ENCODE measurements at regions of chr17 and their contacts with region 1.

Region 1: GRCh38 chr17:27805520-27806146 is 5.3 kb upstream of the NOS2 start:
- DNase-seq: peak; percentile 86
- ATAC-seq: peak; percentile 97
- H3K4me3 ChIP-seq: no peak overlapping the region
- H3K27ac ChIP-seq: no peak overlapping the region
- H3K4me1 ChIP-seq: peaks cover 3% of the 10 kb centered on the region
- H3K27me3 ChIP-seq: peaks cover 10% of the 10 kb centered on the region
- CTCF ChIP-seq: peak; percentile 82
- POLR2A ChIP-seq: no peak
- RAD21 ChIP-seq: peak; percentile 79

Region 2: DNA sequence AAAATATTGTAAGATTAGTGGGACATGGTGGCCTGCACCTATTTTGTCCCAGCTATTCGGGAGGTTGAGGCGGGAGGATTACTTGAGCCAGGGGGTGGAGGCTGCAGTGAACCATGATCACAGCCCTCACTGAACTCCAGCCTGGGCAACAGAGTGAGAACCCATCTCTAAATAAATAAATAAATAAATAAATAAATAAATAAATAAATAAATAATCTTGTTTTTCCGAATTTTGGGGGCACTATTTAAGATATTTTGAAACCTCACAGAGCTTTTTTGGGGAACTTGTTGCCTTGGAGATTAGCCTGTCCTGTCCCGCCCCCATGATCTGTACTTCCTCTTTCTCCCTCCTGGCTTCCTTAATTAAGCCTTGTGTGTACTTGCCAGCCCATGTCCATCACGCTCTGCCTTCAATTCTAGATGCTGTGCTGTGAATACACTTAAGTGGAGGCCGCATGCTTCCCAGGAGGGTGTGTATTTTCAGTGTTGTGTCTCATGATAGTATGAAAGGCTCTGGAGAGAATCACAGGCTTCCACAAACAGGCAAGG is 170.3 kb before region 1 on chr17:
- CTCF ChIA-PET with region 1: no interaction called
- POLR2A ChIA-PET with region 1: no interaction called
- dilution Hi-C with region 1: no loop called
- in situ Hi-C with region 1: no loop called
- intact Hi-C with region 1: no loop called
- DNase-seq: no peak
- ATAC-seq: no peak
- H3K4me3 ChIP-seq: no peak overlapping the region
- H3K27ac ChIP-seq: no peak overlapping the region
- H3K4me1 ChIP-seq: peaks cover 10% of the 10 kb centered on the region
- H3K27me3 ChIP-seq: no peaks in the 10 kb centered on the region
- CTCF ChIP-seq: no peak
- POLR2A ChIP-seq: no peak
- RAD21 ChIP-seq: no peak

Region 3: GRCh38 chr17:27879987-27880608 is 74.5 kb after region 1 on chr17:
- CTCF ChIA-PET with region 1: interaction called, 62 read pairs
- POLR2A ChIA-PET with region 1: no interaction called
- dilution Hi-C with region 1: no loop called
- in situ Hi-C with region 1: loop called (anchors 10 kb)
- intact Hi-C with region 1: loop called (anchors 1 kb)
- DNase-seq: peak; percentile 54
- ATAC-seq: peak; percentile 98
- H3K4me3 ChIP-seq: no peak overlapping the region
- H3K27ac ChIP-seq: no peak overlapping the region
- H3K4me1 ChIP-seq: no peaks in the 10 kb centered on the region
- H3K27me3 ChIP-seq: no peaks in the 10 kb centered on the region; the same call in 1 of the 2 replicates
- CTCF ChIP-seq: peak; percentile 88
- POLR2A ChIP-seq: no peak
- RAD21 ChIP-seq: peak; percentile 93

Region 4: GRCh38 chr17:28145348-28145747 is 339.7 kb after region 1 on chr17:
- CTCF ChIA-PET with region 1: no interaction called
- POLR2A ChIA-PET with region 1: no interaction called
- dilution Hi-C with region 1: no loop called
- in situ Hi-C with region 1: no loop called
- intact Hi-C with region 1: loop called (anchors 10 kb)
- DNase-seq: peak; percentile 29
- ATAC-seq: peak; percentile 12; the same call in 1 of the 2 replicates
- H3K4me3 ChIP-seq: no peak overlapping the region
- H3K27ac ChIP-seq: no peak overlapping the region
- H3K4me1 ChIP-seq: peaks cover 4% of the 10 kb centered on the region
- H3K27me3 ChIP-seq: no peaks in the 10 kb centered on the region
- CTCF ChIP-seq: no peak
- POLR2A ChIP-seq: no peak
- RAD21 ChIP-seq: no peak

Region 5: DNA sequence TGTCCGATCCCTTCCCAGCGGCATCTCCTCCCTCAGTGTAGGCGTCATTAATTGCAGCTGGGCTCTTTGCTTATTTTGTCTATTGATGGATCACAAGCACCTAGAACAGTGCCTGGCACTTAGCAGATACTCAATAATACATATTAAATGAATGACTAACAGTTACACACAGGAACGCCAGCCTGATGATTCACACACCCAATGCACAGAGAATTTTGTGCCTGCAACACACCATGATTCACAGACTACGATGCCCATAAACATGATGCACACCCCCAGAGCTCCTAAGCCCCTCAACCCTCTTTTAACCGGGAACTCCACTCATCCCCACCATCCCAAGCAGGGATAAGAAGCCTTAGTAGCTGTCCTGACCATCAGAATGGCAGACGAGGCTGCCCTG is 446.8 kb after region 1 on chr17:
- CTCF ChIA-PET with region 1: interaction called, 3 read pairs
- POLR2A ChIA-PET with region 1: no interaction called
- dilution Hi-C with region 1: no loop called
- in situ Hi-C with region 1: loop called (anchors 10 kb)
- intact Hi-C with region 1: loop called (anchors 1 kb)
- DNase-seq: peak; percentile 62
- ATAC-seq: peak; percentile 13; the same call in 1 of the 2 replicates
- H3K4me3 ChIP-seq: no peak overlapping the region
- H3K27ac ChIP-seq: no peak overlapping the region
- H3K4me1 ChIP-seq: no peaks in the 10 kb centered on the region
- H3K27me3 ChIP-seq: peaks cover 20% of the 10 kb centered on the region
- CTCF ChIP-seq: no peak
- POLR2A ChIP-seq: no peak
- RAD21 ChIP-seq: no peak

Region 6: GRCh38 chr17:28327031-28327607 is 521.5 kb after region 1 on chr17:
- CTCF ChIA-PET with region 1: no interaction called
- POLR2A ChIA-PET with region 1: no interaction called
- dilution Hi-C with region 1: no loop called
- in situ Hi-C with region 1: no loop called
- intact Hi-C with region 1: loop called (anchors 10 kb)
- DNase-seq: peak; percentile 52
- ATAC-seq: no peak
- H3K4me3 ChIP-seq: no peak overlapping the region
- H3K27ac ChIP-seq: no peak overlapping the region
- H3K4me1 ChIP-seq: peaks cover 6% of the 10 kb centered on the region; the same call in 1 of the 2 replicates
- H3K27me3 ChIP-seq: no peaks in the 10 kb centered on the region
- CTCF ChIP-seq: no peak
- POLR2A ChIP-seq: no peak
- RAD21 ChIP-seq: no peak

Region 7: DNA sequence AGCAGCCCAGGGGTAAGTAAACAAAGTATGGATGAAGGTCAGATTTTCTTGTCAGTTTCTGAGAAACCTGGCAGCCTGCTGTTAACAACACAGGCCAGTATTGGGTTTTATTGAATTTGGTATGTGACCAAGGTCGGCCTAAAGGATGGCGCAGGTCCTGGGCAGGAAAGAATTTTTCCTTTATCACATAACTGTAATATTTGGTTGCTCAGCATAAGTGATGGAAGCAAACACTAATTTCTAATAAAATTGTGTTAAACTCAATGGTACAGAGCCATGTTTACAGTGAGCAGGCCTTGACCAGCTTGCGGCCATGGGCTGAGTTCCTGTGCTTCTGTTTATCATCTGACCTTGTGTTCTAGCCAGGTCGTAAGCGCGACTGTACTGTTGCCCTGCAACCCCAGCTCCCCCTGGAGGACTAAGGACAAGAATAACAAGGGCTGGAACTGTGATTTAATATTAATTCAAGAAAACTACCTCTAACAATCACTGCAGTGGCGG is 541.2 kb after region 1 on chr17:
- CTCF ChIA-PET with region 1: no interaction called
- POLR2A ChIA-PET with region 1: no interaction called
- dilution Hi-C with region 1: no loop called
- in situ Hi-C with region 1: no loop called
- intact Hi-C with region 1: loop called (anchors 2 kb)
- DNase-seq: no peak
- ATAC-seq: peak; percentile 48
- H3K4me3 ChIP-seq: no peak overlapping the region
- H3K27ac ChIP-seq: peak overlapping the region; percentile 58
- H3K4me1 ChIP-seq: peaks cover 16% of the 10 kb centered on the region
- H3K27me3 ChIP-seq: no peaks in the 10 kb centered on the region
- CTCF ChIP-seq: peak; percentile 44
- POLR2A ChIP-seq: no peak
- RAD21 ChIP-seq: peak; percentile 32

Measured in IMR-90 (cell line).